Heart left ventricle (tissue), 16 donors: ENCODE measurements at regions of chr11 and their contacts with region 1.

Region 1: DNA sequence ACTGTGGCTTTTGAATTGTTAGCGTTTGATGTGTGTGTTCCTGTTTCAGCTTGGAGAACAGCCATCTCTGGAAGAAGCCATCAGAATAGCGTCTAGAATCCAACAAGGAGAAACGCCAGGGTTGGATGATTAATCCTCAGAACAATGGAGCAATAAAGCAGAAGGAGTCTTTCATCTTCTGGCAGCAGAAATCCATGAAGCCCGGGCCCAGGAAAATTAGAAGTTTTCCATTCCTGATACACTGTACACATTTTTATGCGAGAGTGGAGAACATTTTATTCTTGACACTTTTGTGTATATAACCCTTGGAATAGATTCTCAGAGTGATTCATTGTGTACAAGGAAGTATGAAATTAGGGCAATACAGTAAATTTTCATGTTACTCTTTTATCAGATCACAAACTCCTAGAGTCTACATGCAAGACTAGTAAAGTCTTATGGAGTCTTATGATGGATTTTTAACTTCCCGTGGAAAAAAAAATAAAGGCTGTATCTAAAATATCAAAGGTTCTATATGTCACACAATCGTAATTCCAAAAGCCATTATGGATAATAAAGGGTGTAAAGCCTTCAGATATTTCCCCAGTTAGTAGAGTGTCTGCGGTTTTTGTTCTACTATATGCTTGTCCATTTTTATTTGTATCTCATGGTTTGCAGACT is 45.9 kb upstream of the WEE1 start:
- DNase-seq: no peak
- ATAC-seq: peak in 3 of 4 donors; percentile 50 to 74 (median 68)
- H3K4me3 ChIP-seq: no peak overlapping the region
- H3K27ac ChIP-seq: peak overlapping the region in 6 of 12 donors; percentile 25 to 78 (median 38)
- H3K4me1 ChIP-seq: peaks cover 0 to 28% (median 11%) of the 10 kb centered on the region in 12 donors
- H3K27me3 ChIP-seq: no peaks in the 10 kb centered on the region
- CTCF ChIP-seq: no peak
- POLR2A ChIP-seq: no peak

Region 2: GRCh38 chr11:9489080-9489765 is 38.4 kb before region 1 on chr11:
- intact Hi-C with region 1: no loop called
- DNase-seq: no peak
- ATAC-seq: no peak
- H3K4me3 ChIP-seq: no peak overlapping the region
- H3K27ac ChIP-seq: no peak overlapping the region
- H3K4me1 ChIP-seq: no peaks in the 10 kb centered on the region
- H3K27me3 ChIP-seq: no peaks in the 10 kb centered on the region
- CTCF ChIP-seq: no peak
- POLR2A ChIP-seq: no peak

Region 3: DNA sequence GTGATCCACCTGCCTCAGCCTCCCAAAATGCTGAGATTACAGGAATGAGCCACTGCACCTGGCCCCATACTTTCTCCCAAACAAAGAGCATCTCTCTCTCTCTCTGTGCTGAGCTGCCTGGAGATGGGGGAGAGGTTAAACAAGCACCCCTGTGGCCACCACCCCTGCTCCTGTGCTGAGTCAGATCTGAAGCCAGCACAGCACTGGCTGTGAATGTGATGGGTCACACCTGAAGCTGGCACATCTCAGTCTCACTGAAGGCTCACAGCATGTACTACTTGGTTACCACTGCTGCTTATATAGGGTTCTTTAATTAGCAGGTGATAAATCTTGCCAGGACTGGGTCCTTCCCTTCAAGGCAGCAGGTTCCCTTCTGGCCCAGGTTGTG is 35.1 kb after region 1 on chr11:
- intact Hi-C with region 1: loop called in 1 of 10 experiments (anchors 5 kb)
- DNase-seq: no peak
- ATAC-seq: no peak
- H3K4me3 ChIP-seq: no peak overlapping the region
- H3K27ac ChIP-seq: no peak overlapping the region
- H3K4me1 ChIP-seq: peaks cover 6 to 28% (median 18%) of the 10 kb centered on the region in 12 donors
- H3K27me3 ChIP-seq: no peaks in the 10 kb centered on the region
- CTCF ChIP-seq: no peak
- POLR2A ChIP-seq: no peak